ENCODE measurements at regions of chrX and their contacts with region 1.

Region 1: DNA sequence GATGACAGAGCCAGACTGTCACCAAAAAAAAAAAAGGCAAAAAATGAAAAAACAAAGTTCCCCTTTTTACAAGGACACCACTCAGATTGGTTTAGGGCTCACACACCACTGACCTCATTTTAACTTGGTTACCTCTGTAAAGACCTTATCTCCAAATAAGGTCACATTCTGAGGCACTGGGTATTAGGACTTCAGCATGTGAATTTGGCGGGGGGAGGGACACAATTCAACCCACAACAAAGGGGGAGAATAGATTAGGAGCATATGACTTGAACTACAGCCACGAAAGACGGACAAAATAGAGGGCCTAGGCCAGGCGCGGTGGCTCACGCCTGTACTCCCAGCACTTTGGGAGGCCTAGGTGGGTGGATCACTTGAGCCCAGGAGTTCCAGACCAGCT is 31.0 kb upstream of the ARAF start:
- DNase-seq: no peak
- ATAC-seq: peak; percentile 89
- H3K4me3 ChIP-seq: no peak overlapping the region
- H3K27ac ChIP-seq: no peak overlapping the region
- H3K4me1 ChIP-seq: no peaks in the 10 kb centered on the region
- H3K27me3 ChIP-seq: no peaks in the 10 kb centered on the region
- CTCF ChIP-seq: no peak
- EP300 ChIP-seq: no peak
- POLR2A ChIP-seq: no peak
- RAD21 ChIP-seq: no peak

Region 2: DNA sequence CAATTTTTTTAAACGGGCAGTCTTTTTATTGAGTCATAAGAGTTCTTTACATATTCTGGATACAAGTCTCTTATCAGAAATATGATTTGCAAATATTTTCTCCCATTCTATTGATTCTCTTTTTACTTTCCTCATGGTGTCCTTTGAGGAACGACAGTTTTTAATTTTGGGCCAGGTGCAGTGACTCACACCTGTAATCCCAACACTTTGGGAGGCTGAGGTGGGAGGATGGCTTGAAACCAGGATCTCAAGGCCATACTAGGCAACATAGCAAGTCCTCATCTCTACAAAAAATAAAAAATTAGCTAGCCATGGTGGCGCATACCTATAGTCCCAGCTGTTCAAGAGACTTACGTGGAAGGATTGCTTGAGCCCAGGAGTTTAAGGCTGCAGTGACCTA is 517.9 kb before region 1 on chrX:
- CTCF ChIA-PET with region 1: no interaction called
- POLR2A ChIA-PET with region 1: no interaction called
- RAD21 ChIA-PET with region 1: no interaction called
- SMC1A ChIA-PET with region 1: no interaction called
- in situ Hi-C with region 1: no loop called
- intact Hi-C with region 1: no loop called
- DNase-seq: no peak
- ATAC-seq: no peak
- H3K4me3 ChIP-seq: no peak overlapping the region
- H3K27ac ChIP-seq: no peak overlapping the region
- H3K4me1 ChIP-seq: no peaks in the 10 kb centered on the region
- H3K27me3 ChIP-seq: no peaks in the 10 kb centered on the region
- CTCF ChIP-seq: no peak
- EP300 ChIP-seq: no peak
- POLR2A ChIP-seq: no peak
- RAD21 ChIP-seq: no peak

Region 3: DNA sequence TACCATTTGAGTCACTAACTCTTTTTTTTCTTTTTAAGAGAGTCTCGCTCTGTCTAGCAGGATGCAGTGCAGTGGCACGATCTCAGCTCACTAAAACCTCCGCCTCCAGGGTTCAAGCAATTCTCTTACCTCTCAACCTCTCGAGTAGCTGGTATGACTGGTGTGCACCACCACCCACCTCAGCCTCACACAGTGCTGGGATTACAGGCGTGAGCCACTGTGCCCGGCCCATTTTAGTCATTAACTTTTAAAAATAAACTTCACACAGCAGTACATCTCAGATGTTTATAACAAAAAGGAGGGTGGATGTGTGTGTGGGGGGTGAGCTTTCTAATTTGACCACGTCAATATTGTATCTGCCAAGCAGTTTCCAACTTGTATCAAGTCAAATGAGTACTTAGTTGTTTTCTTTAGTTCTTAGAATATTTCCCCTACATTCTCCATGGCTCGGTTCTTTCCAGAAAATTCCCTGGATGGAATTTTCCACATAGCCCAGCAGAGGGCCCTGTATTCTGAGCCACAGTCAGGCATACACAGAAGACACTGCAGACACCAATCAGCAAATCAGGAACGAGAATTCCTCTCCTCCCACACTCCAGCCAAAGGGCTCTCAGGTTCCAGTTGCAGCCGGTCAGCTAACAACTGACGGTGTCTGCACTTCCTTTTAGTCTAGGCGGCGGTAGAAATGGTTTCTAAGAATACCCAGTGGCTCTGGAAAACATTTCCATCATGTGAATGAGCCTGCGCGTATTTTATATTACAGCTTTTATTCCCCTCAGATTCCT is 10.9 kb after region 1 on chrX:
- CTCF ChIA-PET with region 1: interaction called, 3 read pairs
- POLR2A ChIA-PET with region 1: interaction called, 11 read pairs
- RAD21 ChIA-PET with region 1: no interaction called
- SMC1A ChIA-PET with region 1: no interaction called
- in situ Hi-C with region 1: no loop called
- intact Hi-C with region 1: no loop called
- DNase-seq: no peak
- ATAC-seq: peak; percentile 55
- H3K4me3 ChIP-seq: no peak overlapping the region
- H3K27ac ChIP-seq: no peak overlapping the region
- H3K4me1 ChIP-seq: no peaks in the 10 kb centered on the region
- H3K27me3 ChIP-seq: no peaks in the 10 kb centered on the region
- CTCF ChIP-seq: peak in 2 of 3 experiments; percentile 24 to 40; a peak in 3 of 6 replicates
- EP300 ChIP-seq: no peak
- POLR2A ChIP-seq: no peak
- RAD21 ChIP-seq: peak; percentile 27; the same call in 1 of the 2 replicates

Region 4: GRCh38 chrX:48278958-48279357 is 748.9 kb after region 1 on chrX:
- CTCF ChIA-PET with region 1: no interaction called
- POLR2A ChIA-PET with region 1: no interaction called
- RAD21 ChIA-PET with region 1: no interaction called
- SMC1A ChIA-PET with region 1: no interaction called
- in situ Hi-C with region 1: no loop called
- intact Hi-C with region 1: no loop called
- DNase-seq: no peak
- ATAC-seq: no peak
- H3K4me3 ChIP-seq: no peak overlapping the region
- H3K27ac ChIP-seq: no peak overlapping the region
- H3K4me1 ChIP-seq: no peaks in the 10 kb centered on the region
- H3K27me3 ChIP-seq: no peaks in the 10 kb centered on the region
- CTCF ChIP-seq: no peak
- EP300 ChIP-seq: no peak
- POLR2A ChIP-seq: no peak
- RAD21 ChIP-seq: no peak